Thyroid gland (tissue), 4 donors: ENCODE measurements at regions of chr2 and their contacts with region 1.

Region 1: GRCh38 chr2:128086244-128086643 is 4.8 kb upstream of the UGGT1 start:
- DNase-seq: no peak
- H3K4me3 ChIP-seq: no peak overlapping the region
- H3K27ac ChIP-seq: no peak overlapping the region
- H3K4me1 ChIP-seq: no peaks in the 10 kb centered on the region
- H3K27me3 ChIP-seq: no peaks in the 10 kb centered on the region
- CTCF ChIP-seq: no peak
- POLR2A ChIP-seq: no peak

Region 2: DNA sequence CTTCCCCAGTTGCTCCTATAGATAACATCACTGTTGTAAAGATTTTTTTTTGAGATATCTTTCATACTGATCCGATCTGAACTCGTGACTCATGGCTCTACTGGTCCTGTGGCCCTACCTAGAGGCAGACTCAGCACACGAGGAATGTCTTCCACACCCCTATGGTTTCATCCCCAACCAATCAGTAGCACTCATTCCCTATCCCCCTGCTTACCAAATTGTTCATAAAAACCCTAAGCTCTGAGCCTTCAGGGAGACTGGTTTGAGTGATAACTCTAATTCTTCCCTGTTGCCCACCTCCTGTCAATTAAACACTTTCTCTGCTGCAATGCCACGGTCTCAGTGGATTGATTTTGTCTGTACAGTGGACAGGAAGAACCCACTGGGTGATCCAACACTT is 54.2 kb before region 1 on chr2:
- intact Hi-C with region 1: loop called (anchors 5 kb)
- DNase-seq: no peak
- H3K4me3 ChIP-seq: no peak overlapping the region
- H3K27ac ChIP-seq: no peak overlapping the region
- H3K4me1 ChIP-seq: peaks cover 0 to 5% of the 10 kb centered on the region in 2 donors
- H3K27me3 ChIP-seq: no peaks in the 10 kb centered on the region
- CTCF ChIP-seq: no peak
- POLR2A ChIP-seq: no peak

Region 3: GRCh38 chr2:128305159-128306087 is 219.2 kb after region 1 on chr2:
- intact Hi-C with region 1: no loop called
- DNase-seq: peak; percentile 87 to 95
- H3K4me3 ChIP-seq: no peak overlapping the region
- H3K27ac ChIP-seq: peak overlapping the region; percentile 83 to 92 (median 83)
- H3K4me1 ChIP-seq: peaks cover 32 to 59% of the 10 kb centered on the region in 2 donors
- H3K27me3 ChIP-seq: no peaks in the 10 kb centered on the region
- CTCF ChIP-seq: no peak
- POLR2A ChIP-seq: no peak